Vagina (tissue), 2 donors: ENCODE measurements at regions of chr7 and their contacts with region 1.

Region 1: DNA sequence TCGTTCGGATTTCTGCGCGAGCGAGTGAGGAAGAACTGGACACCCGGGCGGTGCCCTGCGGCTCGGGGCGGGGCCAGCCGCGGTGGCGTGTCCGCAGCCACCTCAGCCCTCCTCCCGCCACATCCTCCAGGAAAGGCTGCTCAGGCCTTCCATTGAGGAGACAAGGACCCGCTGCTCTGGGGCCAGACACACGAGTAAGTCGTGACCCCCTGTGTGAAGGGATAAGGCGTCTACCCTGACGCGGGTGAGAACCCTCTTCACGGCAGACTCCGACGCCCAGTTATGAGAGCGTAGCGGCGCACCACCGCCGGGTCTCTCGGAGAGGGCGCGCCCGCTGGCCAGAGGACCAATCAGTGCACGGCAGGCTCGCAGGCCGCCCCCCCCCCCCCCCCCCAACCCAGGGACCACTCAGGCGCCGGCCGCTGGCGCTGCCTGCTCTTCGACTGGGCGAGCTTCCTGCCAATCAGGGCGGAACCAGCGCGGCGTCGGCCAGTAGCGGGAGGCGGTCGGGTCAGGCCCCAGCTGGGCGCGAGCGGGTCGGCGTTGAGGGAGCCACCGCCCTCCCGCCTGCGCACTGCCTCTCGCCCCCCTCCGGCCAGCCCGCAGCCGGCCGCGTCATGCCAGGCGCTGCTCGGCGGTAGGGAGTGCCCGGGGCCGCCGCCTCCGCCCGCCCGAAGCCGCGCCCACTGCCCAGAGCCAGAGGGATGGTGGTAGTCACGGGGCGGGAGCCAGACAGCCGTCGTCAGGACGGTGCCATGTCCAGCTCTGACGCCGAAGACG is at the start of gene KCTD7:
- DNase-seq: peak; percentile 97 to 99
- H3K4me3 ChIP-seq: peak within 1 kb of the TSS; percentile 59 to 89
- H3K27ac ChIP-seq: peak within 1 kb of the TSS; percentile 98
- H3K4me1 ChIP-seq: peaks cover 25% of the 10 kb centered on the region
- H3K27me3 ChIP-seq: no peaks in the 10 kb centered on the region
- CTCF ChIP-seq: no peak
- POLR2A ChIP-seq: peak in 1 of 2 donors; percentile 98
- total RNA-seq, gene KCTD7: 20.6 TPM

Region 2: GRCh38 chr7:66591799-66592596 is 36.6 kb before region 1 on chr7:
- intact Hi-C with region 1: loop called (anchors 5 kb)
- DNase-seq: peak; percentile 93 to 98
- H3K4me3 ChIP-seq: peak overlapping the region; percentile 84 to 99
- H3K27ac ChIP-seq: peak overlapping the region; percentile 98
- H3K4me1 ChIP-seq: peaks cover 44% of the 10 kb centered on the region
- H3K27me3 ChIP-seq: no peaks in the 10 kb centered on the region
- CTCF ChIP-seq: no peak
- POLR2A ChIP-seq: peak in 1 of 2 donors; percentile 90

Region 3: DNA sequence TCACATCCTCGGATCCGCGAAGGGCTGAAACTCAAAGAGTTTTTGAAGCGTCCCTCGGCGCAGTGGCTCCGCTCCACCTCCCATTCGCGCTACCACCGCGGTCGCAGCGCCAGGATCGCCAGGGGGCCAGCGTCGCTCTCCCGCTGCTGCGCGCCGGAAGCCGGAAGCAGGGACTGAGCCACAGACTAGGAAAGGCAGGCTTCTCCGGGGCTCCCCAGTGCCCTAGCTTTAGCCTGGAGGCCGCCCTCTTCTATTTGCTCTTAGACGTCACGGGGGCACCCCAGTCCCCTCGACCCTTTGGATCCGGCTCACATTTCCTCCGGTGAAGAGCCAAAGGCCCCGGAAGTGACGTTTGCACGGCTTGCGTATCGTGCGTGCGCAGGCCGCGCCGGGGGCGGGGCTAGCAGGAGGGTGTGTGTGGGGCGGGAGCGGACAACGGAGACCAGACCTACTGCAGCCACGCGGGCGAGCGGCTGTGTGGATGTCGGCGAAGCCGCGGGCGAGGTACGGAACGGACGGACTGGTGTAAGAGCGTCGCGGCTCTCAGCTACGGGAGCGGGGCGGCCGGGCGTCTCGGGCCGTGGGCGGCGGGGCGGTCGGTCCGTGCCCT is 25.7 kb after region 1 on chr7:
- intact Hi-C with region 1: loop called (anchors 2 kb)
- DNase-seq: peak in 1 of 2 donors; percentile 99
- H3K4me3 ChIP-seq: peak overlapping the region; percentile 77 to 94
- H3K27ac ChIP-seq: peak overlapping the region; percentile 97
- H3K4me1 ChIP-seq: peaks cover 19% of the 10 kb centered on the region
- H3K27me3 ChIP-seq: no peaks in the 10 kb centered on the region
- CTCF ChIP-seq: peak in 1 of 3 experiments; percentile 33
- POLR2A ChIP-seq: peak; percentile 76 to 93

Region 4: GRCh38 chr7:67771846-67772605 is 1143.5 kb after region 1 on chr7:
- intact Hi-C with region 1: no loop called
- DNase-seq: no peak
- H3K4me3 ChIP-seq: no peak overlapping the region
- H3K27ac ChIP-seq: no peak overlapping the region
- H3K4me1 ChIP-seq: no peaks in the 10 kb centered on the region
- H3K27me3 ChIP-seq: no peaks in the 10 kb centered on the region
- CTCF ChIP-seq: no peak
- POLR2A ChIP-seq: no peak